Endothelial cell of umbilical vein (primary cell): ENCODE measurements at regions of chr5 and their contacts with region 1.

Region 1: DNA sequence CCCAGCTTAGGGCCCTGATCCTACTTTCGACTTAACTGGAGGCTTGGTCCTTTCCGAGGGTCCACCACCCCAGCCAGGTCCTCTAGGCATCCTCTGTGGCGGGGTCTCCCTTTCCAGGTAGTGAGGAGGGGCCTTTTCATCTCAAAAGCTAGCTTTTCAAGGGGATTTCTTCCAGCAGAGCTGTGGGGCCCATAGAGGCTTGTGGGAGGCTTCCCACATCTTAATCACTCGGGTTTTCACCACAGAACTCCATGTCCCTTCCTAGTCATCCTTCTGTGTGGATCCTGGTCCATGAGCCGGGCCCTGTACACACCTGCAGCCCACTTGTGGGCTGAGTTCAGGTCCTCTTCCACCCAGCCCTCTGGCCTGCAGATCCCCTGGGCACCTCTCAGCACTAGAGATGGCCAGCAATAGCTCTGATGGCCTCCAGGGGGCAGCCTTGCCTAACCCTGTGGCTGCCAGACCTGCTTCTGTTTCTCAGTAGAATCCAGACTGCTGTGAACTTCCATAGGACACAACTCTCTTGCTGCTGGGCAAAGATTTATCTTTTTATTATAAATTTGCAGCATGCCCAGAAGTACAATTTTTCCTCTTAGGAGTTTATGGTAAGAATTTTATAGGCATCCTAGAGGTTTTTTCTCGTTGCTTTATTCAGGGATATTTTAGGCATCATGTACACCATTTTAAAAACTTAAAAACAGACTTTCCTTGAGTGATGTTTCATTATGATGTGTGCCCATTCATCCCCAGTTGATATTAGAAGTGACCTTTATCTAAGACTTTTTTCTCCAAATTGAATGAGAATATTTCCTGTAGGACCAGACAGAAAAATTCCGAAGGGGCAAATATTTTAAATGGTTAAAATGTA is 208.9 kb downstream of the TRIO start:
- DNase-seq: peak; percentile 65
- H3K4me3 ChIP-seq: no peak overlapping the region
- H3K27ac ChIP-seq: no peak overlapping the region
- H3K4me1 ChIP-seq: peaks cover 19% of the 10 kb centered on the region
- H3K27me3 ChIP-seq: no peaks in the 10 kb centered on the region
- CTCF ChIP-seq: peak; percentile 96 to 98
- POLR2A ChIP-seq: no peak

Region 2: DNA sequence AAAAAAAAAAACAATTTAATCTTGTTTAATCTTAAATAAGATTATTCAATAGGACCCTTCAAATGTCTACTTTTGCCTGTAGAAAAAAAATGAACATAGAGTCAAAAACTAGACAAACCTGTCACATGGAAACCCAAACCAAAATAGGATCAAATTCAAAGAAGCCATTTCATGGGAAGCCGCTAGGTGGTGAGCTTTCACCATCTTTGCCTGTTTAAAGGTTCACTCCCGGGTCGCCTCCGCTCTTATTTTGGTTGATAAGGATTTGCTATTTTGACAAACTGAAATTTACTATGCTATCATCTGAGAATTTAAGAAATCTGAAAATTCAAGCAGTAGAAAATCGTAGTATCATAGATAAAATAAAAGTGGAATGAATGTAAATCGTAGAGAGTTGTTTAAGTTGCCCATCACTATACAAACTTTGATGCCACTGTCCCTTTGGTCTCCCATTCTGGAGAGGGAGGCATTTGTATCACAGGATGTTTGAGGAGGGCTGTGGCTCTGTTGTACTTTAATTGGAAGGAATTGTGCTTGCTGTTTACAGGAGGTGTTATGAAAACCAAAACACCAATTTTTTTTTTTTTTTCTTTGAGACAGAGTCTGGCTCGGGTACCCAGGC is 364.1 kb before region 1 on chr5:
- CTCF ChIA-PET with region 1: interaction called, 4 read pairs
- POLR2A ChIA-PET with region 1: no interaction called
- dilution Hi-C with region 1: no loop called
- intact Hi-C with region 1: loop called (anchors 1 kb)
- DNase-seq: peak; percentile 64
- H3K4me3 ChIP-seq: no peak overlapping the region
- H3K27ac ChIP-seq: no peak overlapping the region
- H3K4me1 ChIP-seq: peaks cover 16% of the 10 kb centered on the region
- H3K27me3 ChIP-seq: no peaks in the 10 kb centered on the region
- CTCF ChIP-seq: peak; percentile 69 to 84
- POLR2A ChIP-seq: no peak

Region 3: DNA sequence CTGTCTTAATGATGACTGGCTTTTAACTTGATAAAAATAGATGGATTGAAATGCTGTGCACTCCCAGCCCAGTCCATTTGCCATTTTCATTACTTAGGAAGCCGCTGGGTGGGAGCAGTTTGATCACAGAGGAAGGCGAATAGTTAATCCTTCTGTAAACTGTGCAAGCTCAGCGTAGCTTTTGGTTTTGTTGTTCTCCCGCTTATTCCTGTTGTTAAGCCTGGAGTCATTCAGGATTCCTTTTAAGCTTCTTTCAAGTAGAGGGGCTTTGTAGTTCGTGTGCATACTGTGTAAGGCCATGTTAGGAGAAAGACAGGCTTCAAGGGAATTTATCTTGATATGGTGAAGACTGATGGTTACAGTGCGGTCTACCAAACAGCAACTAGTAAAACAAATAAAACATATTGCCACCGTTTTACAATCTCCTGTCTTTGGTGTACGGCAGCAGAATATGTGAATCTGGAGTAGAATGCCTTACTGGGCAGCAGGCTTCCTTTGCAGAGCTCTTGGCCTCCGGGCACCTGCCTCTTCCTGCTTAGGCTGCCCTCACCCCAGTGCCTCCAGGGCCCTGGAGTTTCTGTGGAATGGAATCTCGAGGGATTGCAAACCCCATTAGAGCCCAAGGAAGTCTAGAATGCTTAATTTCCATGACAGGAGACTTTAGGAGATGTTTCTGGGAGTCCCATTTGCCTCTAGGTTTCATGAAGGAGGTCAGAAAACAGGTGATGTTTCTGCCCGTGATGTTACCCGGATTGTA is 67.5 kb before region 1 on chr5:
- CTCF ChIA-PET with region 1: no interaction called
- POLR2A ChIA-PET with region 1: no interaction called
- dilution Hi-C with region 1: no loop called
- intact Hi-C with region 1: no loop called
- DNase-seq: no peak
- H3K4me3 ChIP-seq: no peak overlapping the region
- H3K27ac ChIP-seq: no peak overlapping the region
- H3K4me1 ChIP-seq: no peaks in the 10 kb centered on the region
- H3K27me3 ChIP-seq: no peaks in the 10 kb centered on the region
- CTCF ChIP-seq: no peak
- POLR2A ChIP-seq: no peak

Region 4: GRCh38 chr5:14313986-14314690 is 37.9 kb before region 1 on chr5:
- CTCF ChIA-PET with region 1: interaction called, 10 read pairs
- POLR2A ChIA-PET with region 1: no interaction called
- dilution Hi-C with region 1: no loop called
- intact Hi-C with region 1: no loop called
- DNase-seq: no peak
- H3K4me3 ChIP-seq: no peak overlapping the region
- H3K27ac ChIP-seq: no peak overlapping the region
- H3K4me1 ChIP-seq: no peaks in the 10 kb centered on the region
- H3K27me3 ChIP-seq: no peaks in the 10 kb centered on the region
- CTCF ChIP-seq: no peak
- POLR2A ChIP-seq: no peak

Region 5: GRCh38 chr5:14326035-14326903 is 25.8 kb before region 1 on chr5:
- CTCF ChIA-PET with region 1: interaction called, 10 read pairs
- POLR2A ChIA-PET with region 1: no interaction called
- dilution Hi-C with region 1: no loop called
- intact Hi-C with region 1: no loop called
- DNase-seq: peak; percentile 21
- H3K4me3 ChIP-seq: no peak overlapping the region
- H3K27ac ChIP-seq: no peak overlapping the region
- H3K4me1 ChIP-seq: no peaks in the 10 kb centered on the region
- H3K27me3 ChIP-seq: no peaks in the 10 kb centered on the region
- CTCF ChIP-seq: peak in 1 of 2 donors; percentile 36
- POLR2A ChIP-seq: no peak

Region 6: DNA sequence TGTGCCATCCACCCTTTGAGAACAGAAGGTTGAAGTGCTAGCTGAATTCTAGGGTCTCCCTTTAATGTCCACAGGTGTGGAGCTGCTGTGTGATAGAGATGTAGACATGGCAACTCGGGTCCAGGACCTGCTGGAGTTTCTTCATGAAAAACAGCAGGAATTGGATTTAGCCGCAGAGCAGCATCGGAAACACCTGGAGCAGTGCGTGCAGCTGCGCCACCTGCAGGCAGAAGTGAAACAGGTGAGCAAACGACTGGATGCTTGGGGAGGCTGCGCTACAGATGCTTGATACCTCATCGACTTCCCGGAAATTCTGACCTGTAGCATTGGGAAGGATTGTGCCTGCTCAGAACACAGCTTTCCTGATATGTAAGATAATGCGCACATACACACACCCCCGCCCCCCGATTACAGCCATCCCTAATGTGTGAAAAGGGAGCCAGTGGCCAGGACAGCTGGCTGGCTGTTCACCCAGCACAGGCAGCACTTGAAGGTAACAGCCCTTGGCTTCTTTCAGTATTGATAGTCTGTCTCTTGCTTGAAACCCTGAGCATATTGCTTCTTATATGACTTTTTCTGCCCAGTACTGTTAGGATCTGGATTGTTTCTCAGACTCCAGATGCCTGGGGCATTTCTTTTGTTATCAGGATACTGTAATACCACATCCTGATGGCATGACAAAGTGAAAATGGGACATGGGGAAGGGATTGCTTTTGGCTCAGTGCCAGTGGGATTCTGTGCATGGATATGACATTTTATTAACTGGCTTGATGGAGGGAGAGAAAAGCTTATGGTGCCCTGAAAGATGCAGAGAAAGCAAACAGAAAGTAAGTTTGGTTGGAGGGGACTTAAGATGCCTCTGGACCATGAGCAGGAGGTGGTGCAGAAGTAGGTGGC is 12.7 kb after region 1 on chr5:
- CTCF ChIA-PET with region 1: interaction called, 12 read pairs
- POLR2A ChIA-PET with region 1: no interaction called
- dilution Hi-C with region 1: no loop called
- intact Hi-C with region 1: no loop called
- DNase-seq: peak; percentile 9
- H3K4me3 ChIP-seq: no peak overlapping the region
- H3K27ac ChIP-seq: no peak overlapping the region
- H3K4me1 ChIP-seq: no peaks in the 10 kb centered on the region
- H3K27me3 ChIP-seq: no peaks in the 10 kb centered on the region
- CTCF ChIP-seq: peak; percentile 29 to 65
- POLR2A ChIP-seq: no peak

Region 7: DNA sequence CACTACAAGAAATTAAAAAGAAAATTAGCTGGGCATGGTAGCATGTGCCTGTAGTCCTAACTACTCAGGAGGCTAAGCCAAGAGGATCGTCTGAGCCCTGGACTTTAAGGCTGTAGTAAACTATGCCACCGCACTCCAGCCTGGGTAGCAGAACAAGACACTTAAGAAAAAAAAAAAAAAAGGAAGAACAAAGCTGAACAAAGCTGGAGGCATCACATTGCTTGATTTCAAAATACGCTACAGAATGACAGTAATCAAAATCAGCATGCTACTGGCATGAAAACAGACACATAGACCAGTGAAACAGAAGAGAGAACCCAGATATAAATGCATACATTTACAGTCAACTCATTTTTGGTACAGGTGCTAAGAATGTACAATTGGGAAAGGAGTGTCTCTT is 298.0 kb after region 1 on chr5:
- CTCF ChIA-PET with region 1: interaction called, 66 read pairs
- POLR2A ChIA-PET with region 1: no interaction called
- dilution Hi-C with region 1: no loop called
- intact Hi-C with region 1: loop called (anchors 1 kb)
- DNase-seq: no peak
- H3K4me3 ChIP-seq: no peak overlapping the region
- H3K27ac ChIP-seq: no peak overlapping the region
- H3K4me1 ChIP-seq: no peaks in the 10 kb centered on the region
- H3K27me3 ChIP-seq: peaks cover 21 to 34% of the 10 kb centered on the region in 2 experiments
- CTCF ChIP-seq: no peak
- POLR2A ChIP-seq: no peak